Tibial artery (tissue), 4 donors: ENCODE measurements at regions of chr2 and their contacts with region 1.

Region 1: GRCh38 chr2:218466016-218466521 is 47.1 kb downstream of the VIL1 start:
- DNase-seq: no peak
- H3K4me3 ChIP-seq: no peak overlapping the region
- H3K27ac ChIP-seq: no peak overlapping the region
- H3K4me1 ChIP-seq: no peaks in the 10 kb centered on the region
- H3K27me3 ChIP-seq: no peaks in the 10 kb centered on the region
- CTCF ChIP-seq: peak; percentile 45 to 59

Region 2: GRCh38 chr2:218406209-218406948 is 59.7 kb before region 1 on chr2:
- intact Hi-C with region 1: loop called (anchors 5 kb)
- DNase-seq: peak; percentile 96 to 98
- H3K4me3 ChIP-seq: peak overlapping the region; percentile 48 to 55
- H3K27ac ChIP-seq: peak overlapping the region; percentile 80 to 89
- H3K4me1 ChIP-seq: peaks cover 0 to 58% (median 46%) of the 10 kb centered on the region in 4 donors
- H3K27me3 ChIP-seq: no peaks in the 10 kb centered on the region
- CTCF ChIP-seq: peak; percentile 81